ENCODE measurements at regions of chr4 and their contacts with region 1.

Region 1: DNA sequence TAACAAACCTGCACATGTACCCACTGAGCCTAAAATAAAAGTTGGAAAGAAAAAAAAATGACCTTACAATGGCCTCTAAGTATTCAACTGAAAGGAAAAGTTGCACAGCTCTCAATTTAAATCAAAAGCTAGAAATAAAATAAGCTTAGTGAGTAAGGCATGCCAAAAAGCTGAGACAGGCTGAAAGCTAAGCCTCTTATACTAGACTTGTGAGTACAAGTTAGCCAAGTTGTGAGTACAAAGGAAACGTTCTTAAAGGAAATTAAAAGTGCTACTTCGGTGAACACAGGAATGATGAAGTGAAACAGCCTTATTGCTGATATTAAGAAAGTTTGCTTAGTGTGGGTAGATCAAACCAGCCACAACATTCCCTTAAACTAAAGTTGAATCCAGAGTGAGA is 707.9 kb upstream of the PITX2 start:
- DNase-seq: no peak
- H3K4me3 ChIP-seq: no peak overlapping the region
- H3K27ac ChIP-seq: no peak overlapping the region
- H3K4me1 ChIP-seq: no peaks in the 10 kb centered on the region
- H3K27me3 ChIP-seq: no peaks in the 10 kb centered on the region
- CTCF ChIP-seq: no peak

Region 2: GRCh38 chr4:111890412-111890811 is 559.6 kb after region 1 on chr4:
- CTCF ChIA-PET with region 1: no interaction called
- dilution Hi-C with region 1: no loop called
- in situ Hi-C with region 1: no loop called
- intact Hi-C with region 1: loop called (anchors 10 kb)
- DNase-seq: no peak
- H3K4me3 ChIP-seq: no peak overlapping the region
- H3K27ac ChIP-seq: no peak overlapping the region
- H3K4me1 ChIP-seq: no peaks in the 10 kb centered on the region
- H3K27me3 ChIP-seq: peaks cover 8% of the 10 kb centered on the region
- CTCF ChIP-seq: no peak